Endothelial cell of umbilical vein (primary cell): ENCODE measurements at regions of chr11 and their contacts with region 1.

Region 1: GRCh38 chr11:17354601-17354991 is 3.0 kb downstream of the NCR3LG1 start:
- DNase-seq: peak; percentile 77
- H3K4me3 ChIP-seq: peak overlapping the region in 1 of 3 experiments; percentile 85
- H3K27ac ChIP-seq: no peak overlapping the region
- H3K4me1 ChIP-seq: peaks cover 16% of the 10 kb centered on the region
- H3K27me3 ChIP-seq: no peaks in the 10 kb centered on the region
- CTCF ChIP-seq: peak; percentile 55 to 57
- POLR2A ChIP-seq: no peak

Region 2: GRCh38 chr11:16791191-16791961 is 563.2 kb before region 1 on chr11:
- CTCF ChIA-PET with region 1: no interaction called
- POLR2A ChIA-PET with region 1: no interaction called
- dilution Hi-C with region 1: no loop called
- intact Hi-C with region 1: loop called (anchors 5 kb)
- DNase-seq: peak; percentile 94
- H3K4me3 ChIP-seq: no peak overlapping the region
- H3K27ac ChIP-seq: peak overlapping the region; percentile 89
- H3K4me1 ChIP-seq: peaks cover 52% of the 10 kb centered on the region
- H3K27me3 ChIP-seq: no peaks in the 10 kb centered on the region
- CTCF ChIP-seq: no peak
- POLR2A ChIP-seq: peak; percentile 55

Region 3: GRCh38 chr11:17207317-17208258 is 147.0 kb before region 1 on chr11 and contains the start of gene PIK3C2A:
- CTCF ChIA-PET with region 1: interaction called, 4 read pairs
- POLR2A ChIA-PET with region 1: interaction called, 6 read pairs
- dilution Hi-C with region 1: no loop called
- intact Hi-C with region 1: loop called (anchors 1 kb)
- DNase-seq: peak; percentile 91
- H3K4me3 ChIP-seq: peak within 1 kb of the TSS; percentile 62 to 99 (median 98)
- H3K27ac ChIP-seq: peak within 1 kb of the TSS; percentile 98
- H3K4me1 ChIP-seq: peaks cover 28% of the 10 kb centered on the region
- H3K27me3 ChIP-seq: no peaks in the 10 kb centered on the region
- CTCF ChIP-seq: no peak
- POLR2A ChIP-seq: peak; percentile 96
- total RNA-seq, gene PIK3C2A: 142 and 148 TPM in 2 replicates

Region 4: GRCh38 chr11:17276236-17277023 is 78.2 kb before region 1 on chr11 and contains the start of gene NUCB2:
- CTCF ChIA-PET with region 1: no interaction called
- POLR2A ChIA-PET with region 1: no interaction called
- dilution Hi-C with region 1: no loop called
- intact Hi-C with region 1: loop called (anchors 1 kb)
- DNase-seq: peak; percentile 98
- H3K4me3 ChIP-seq: peak within 1 kb of the TSS; percentile 84 to 95 (median 95)
- H3K27ac ChIP-seq: peak within 1 kb of the TSS; percentile 65
- H3K4me1 ChIP-seq: peaks cover 11% of the 10 kb centered on the region
- H3K27me3 ChIP-seq: no peaks in the 10 kb centered on the region
- CTCF ChIP-seq: no peak
- POLR2A ChIP-seq: peak; percentile 97
- total RNA-seq, gene NUCB2: 114 and 123 TPM in 2 replicates

Region 5: DNA sequence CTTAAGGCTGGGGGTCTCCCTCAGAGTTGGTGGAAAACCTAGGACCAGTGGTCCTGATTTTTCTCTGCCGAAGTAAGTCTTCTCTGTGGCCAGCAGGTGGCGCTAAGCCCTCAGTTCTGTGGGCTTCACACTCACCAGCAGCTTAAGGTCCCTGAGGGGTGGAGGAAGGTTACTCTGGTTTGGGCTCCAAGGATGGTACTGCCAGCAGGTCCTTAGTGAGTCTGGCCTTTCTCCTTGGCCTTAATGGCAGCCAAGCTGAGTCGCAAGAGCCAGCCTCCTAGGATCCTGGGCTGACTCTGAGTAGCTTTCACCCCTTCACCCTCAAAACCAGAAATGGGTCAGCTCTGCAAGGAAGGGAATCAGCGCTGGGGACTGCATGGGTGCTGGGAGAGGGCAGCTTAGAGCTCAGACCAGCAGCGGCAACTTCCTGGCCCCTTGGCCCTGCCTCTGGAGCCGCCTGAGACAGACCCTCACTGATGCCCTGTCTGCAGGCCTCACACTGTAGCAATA is 29.5 kb after region 1 on chr11:
- CTCF ChIA-PET with region 1: interaction called, 38 read pairs
- POLR2A ChIA-PET with region 1: no interaction called
- dilution Hi-C with region 1: no loop called
- intact Hi-C with region 1: loop called (anchors 2 kb)
- DNase-seq: peak; percentile 66
- H3K4me3 ChIP-seq: no peak overlapping the region
- H3K27ac ChIP-seq: no peak overlapping the region
- H3K4me1 ChIP-seq: no peaks in the 10 kb centered on the region
- H3K27me3 ChIP-seq: no peaks in the 10 kb centered on the region
- CTCF ChIP-seq: peak; percentile 82 to 87
- POLR2A ChIP-seq: no peak

Region 6: GRCh38 chr11:17528181-17528691 is 173.6 kb after region 1 on chr11:
- CTCF ChIA-PET with region 1: interaction called, 21 read pairs
- POLR2A ChIA-PET with region 1: no interaction called
- dilution Hi-C with region 1: no loop called
- intact Hi-C with region 1: loop called (anchors 1 kb)
- DNase-seq: peak; percentile 42
- H3K4me3 ChIP-seq: no peak overlapping the region
- H3K27ac ChIP-seq: no peak overlapping the region
- H3K4me1 ChIP-seq: no peaks in the 10 kb centered on the region
- H3K27me3 ChIP-seq: peaks cover 2 to 3% of the 10 kb centered on the region in 2 experiments
- CTCF ChIP-seq: peak; percentile 80 to 81
- POLR2A ChIP-seq: no peak